Mammary epithelial cell (primary cell): ENCODE measurements at regions of chr20 and their contacts with region 1.

Region 1: GRCh38 chr20:50790651-50791277 is 4.1 kb upstream of the BCAS4 start:
- DNase-seq: peak; percentile 83
- H3K4me3 ChIP-seq: no peak overlapping the region
- H3K27ac ChIP-seq: peak overlapping the region; percentile 83
- H3K4me1 ChIP-seq: peaks cover 14% of the 10 kb centered on the region
- H3K27me3 ChIP-seq: no peaks in the 10 kb centered on the region
- CTCF ChIP-seq: peak; percentile 73 to 92

Region 2: GRCh38 chr20:50189681-50190582 is 600.8 kb before region 1 on chr20:
- CTCF ChIA-PET with region 1: no interaction called
- dilution Hi-C with region 1: no loop called
- in situ Hi-C with region 1: no loop called
- intact Hi-C with region 1: loop called (anchors 1 kb)
- DNase-seq: peak; percentile 69
- H3K4me3 ChIP-seq: peak overlapping the region in 2 of 3 experiments; percentile 89 to 99
- H3K27ac ChIP-seq: peak overlapping the region; percentile 68
- H3K4me1 ChIP-seq: peaks cover 18% of the 10 kb centered on the region
- H3K27me3 ChIP-seq: no peaks in the 10 kb centered on the region
- CTCF ChIP-seq: peak; percentile 25 to 70

Region 3: GRCh38 chr20:50625986-50626677 is 164.6 kb before region 1 on chr20:
- CTCF ChIA-PET with region 1: interaction called, 9 read pairs
- dilution Hi-C with region 1: no loop called
- in situ Hi-C with region 1: no loop called
- intact Hi-C with region 1: loop called (anchors 1 kb)
- DNase-seq: no peak
- H3K4me3 ChIP-seq: no peak overlapping the region
- H3K27ac ChIP-seq: no peak overlapping the region
- H3K4me1 ChIP-seq: peaks cover 26% of the 10 kb centered on the region
- H3K27me3 ChIP-seq: no peaks in the 10 kb centered on the region
- CTCF ChIP-seq: peak; percentile 37 to 51

Region 4: DNA sequence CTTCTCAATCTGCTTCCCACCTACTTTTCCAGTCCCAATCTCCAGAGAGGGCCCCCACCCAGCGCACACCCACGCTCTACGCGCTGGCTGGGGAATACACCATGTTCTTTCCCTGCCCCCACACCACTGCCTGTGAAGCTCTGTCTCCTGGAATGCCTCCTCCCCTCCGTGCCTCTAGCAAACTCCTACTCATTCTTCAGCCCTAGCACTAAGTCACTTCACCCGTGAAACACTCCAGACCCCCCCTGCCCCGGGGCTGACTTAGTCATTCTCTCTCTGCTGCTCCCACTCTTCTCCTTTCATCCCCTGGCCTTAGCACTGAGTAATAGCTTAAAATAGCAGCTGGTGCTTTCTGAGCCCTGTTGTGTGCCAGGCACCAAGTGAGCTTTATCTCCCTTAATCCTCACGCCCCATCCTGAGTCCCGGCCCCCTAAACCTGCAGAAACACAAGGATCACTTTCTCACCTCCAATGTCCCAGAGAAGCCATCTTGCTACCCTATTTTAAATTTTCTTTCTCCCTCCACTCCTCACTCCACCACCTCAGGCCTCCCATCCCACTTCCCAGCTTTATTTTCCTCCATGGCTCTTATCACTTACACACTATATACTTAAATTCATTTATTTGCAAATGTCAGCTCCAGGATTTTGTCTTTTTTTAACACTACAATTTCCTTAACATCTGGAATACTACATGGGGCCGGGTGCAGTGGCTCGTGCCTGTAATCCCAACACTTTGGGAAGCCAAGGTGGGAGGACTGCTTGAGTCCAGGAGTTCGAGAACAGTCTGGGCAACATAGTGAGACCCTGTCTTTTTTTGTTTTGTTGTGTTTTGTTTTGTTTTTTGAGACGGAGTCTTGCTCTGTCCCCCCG is 65.7 kb before region 1 on chr20:
- CTCF ChIA-PET with region 1: no interaction called
- dilution Hi-C with region 1: no loop called
- in situ Hi-C with region 1: no loop called
- intact Hi-C with region 1: no loop called
- DNase-seq: peak; percentile 98
- H3K4me3 ChIP-seq: no peak overlapping the region
- H3K27ac ChIP-seq: peak overlapping the region; percentile 70
- H3K4me1 ChIP-seq: peaks cover 48% of the 10 kb centered on the region
- H3K27me3 ChIP-seq: no peaks in the 10 kb centered on the region
- CTCF ChIP-seq: no peak

Region 5: GRCh38 chr20:50744143-50744792 is 46.5 kb before region 1 on chr20:
- CTCF ChIA-PET with region 1: interaction called, 13 read pairs
- dilution Hi-C with region 1: no loop called
- in situ Hi-C with region 1: no loop called
- intact Hi-C with region 1: loop called (anchors 1 kb)
- DNase-seq: peak; percentile 89
- H3K4me3 ChIP-seq: no peak overlapping the region
- H3K27ac ChIP-seq: peak overlapping the region; percentile 58
- H3K4me1 ChIP-seq: peaks cover 43% of the 10 kb centered on the region
- H3K27me3 ChIP-seq: no peaks in the 10 kb centered on the region
- CTCF ChIP-seq: peak; percentile 47 to 56

Region 6: DNA sequence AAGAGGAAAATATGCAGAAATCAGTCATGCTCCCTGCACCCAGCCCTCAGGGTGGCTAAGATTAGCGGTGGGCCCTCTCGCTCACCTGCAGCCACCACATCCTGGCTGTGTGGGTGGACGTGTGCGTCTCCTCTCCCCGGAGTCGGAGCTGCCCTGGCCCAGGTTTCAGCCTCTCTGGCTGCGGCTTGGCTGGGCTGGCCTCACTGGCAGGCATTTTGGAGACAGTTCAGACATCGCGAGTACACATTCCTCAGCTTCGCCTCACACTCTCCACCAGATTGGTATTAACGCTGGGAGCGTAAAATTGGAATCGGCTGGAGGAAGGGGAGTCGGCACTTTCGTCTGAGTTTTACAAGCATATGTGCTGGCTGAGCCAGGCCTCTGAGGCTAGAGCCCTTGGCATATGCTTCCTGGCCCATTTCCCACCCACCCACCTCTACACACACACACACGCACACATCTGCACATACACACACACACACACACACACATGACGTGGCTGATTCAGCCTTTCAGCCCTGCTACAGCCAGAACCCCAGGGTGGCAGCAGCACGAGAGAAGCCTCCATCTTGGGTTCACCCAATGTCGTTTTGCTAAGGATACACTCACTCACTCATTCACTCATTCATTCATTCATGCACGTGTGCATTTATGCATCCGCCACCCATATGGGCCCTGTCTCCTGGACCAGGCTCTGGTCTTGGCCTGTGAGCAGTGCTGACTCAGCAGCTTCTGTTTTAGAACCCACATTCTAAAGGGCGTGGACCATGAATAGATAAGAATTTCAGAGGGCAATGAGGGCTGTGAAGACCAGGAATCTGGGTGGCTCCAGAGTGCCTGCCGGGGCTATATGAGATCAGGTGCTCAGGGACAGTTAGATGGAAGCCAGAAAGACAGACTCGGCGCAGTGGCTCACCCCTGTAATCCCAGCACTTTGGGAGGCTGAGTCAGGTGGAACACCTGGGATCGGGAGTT is 47.1 kb after region 1 on chr20:
- CTCF ChIA-PET with region 1: no interaction called
- dilution Hi-C with region 1: loop called (anchors 5 kb)
- in situ Hi-C with region 1: no loop called
- intact Hi-C with region 1: no loop called
- DNase-seq: peak; percentile 89
- H3K4me3 ChIP-seq: no peak overlapping the region
- H3K27ac ChIP-seq: peak overlapping the region; percentile 70
- H3K4me1 ChIP-seq: peaks cover 34% of the 10 kb centered on the region
- H3K27me3 ChIP-seq: no peaks in the 10 kb centered on the region
- CTCF ChIP-seq: no peak

Region 7: DNA sequence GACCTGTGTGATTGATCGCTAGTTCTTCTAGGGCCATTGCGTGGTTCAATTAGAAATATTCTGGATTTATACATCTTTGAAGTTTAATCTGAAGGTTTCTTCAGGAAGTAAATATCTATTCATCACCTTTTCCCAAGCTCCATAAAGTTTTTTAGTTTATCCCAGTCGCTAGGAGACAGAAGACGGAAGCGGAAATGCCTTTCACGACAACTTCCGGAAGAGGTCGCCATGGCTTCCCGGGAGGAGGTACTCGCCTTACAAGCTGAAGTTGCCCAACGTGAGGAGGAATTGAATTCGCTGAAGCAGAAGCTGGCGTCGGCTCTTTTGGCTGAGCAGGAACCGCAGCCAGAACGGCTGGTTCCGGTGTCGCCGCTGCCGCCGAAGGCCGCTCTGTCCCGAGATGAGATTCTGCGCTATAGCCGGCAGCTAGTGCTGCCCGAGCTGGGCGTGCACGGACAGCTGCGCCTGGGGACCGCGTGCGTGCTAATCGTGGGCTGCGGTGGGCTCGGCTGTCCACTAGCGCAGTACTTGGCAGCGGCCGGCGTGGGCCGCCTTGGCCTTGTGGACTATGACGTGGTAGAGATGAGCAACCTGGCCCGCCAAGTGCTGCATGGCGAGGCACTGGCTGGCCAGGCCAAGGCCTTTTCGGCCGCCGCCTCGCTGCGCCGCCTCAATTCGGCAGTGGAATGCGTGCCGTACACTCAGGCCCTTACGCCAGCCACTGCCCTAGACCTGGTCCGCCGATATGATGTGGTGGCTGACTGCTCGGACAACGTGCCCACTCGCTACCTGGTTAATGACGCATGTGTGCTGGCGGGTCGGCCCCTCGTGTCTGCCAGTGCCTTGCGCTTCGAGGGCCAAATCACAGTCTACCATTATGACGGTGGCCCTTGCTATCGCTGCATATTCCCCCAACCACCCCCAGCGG is 168.1 kb after region 1 on chr20 and contains the start of gene MOCS3:
- CTCF ChIA-PET with region 1: interaction called, 11 read pairs
- dilution Hi-C with region 1: no loop called
- in situ Hi-C with region 1: no loop called
- intact Hi-C with region 1: loop called (anchors 1 kb)
- DNase-seq: peak; percentile 86
- H3K4me3 ChIP-seq: peak within 1 kb of the TSS; percentile 78 to 100 (median 99)
- H3K27ac ChIP-seq: peak within 1 kb of the TSS; percentile 99
- H3K4me1 ChIP-seq: peaks cover 29% of the 10 kb centered on the region
- H3K27me3 ChIP-seq: no peaks in the 10 kb centered on the region
- CTCF ChIP-seq: no peak
- total RNA-seq, gene MOCS3: 7.2 to 10.8 TPM

Region 8: GRCh38 chr20:51306503-51307358 is 516.0 kb after region 1 on chr20:
- CTCF ChIA-PET with region 1: no interaction called
- dilution Hi-C with region 1: loop called (anchors 25 kb)
- in situ Hi-C with region 1: no loop called
- intact Hi-C with region 1: loop called (anchors 1 kb)
- DNase-seq: peak; percentile 41
- H3K4me3 ChIP-seq: no peak overlapping the region
- H3K27ac ChIP-seq: no peak overlapping the region
- H3K4me1 ChIP-seq: no peaks in the 10 kb centered on the region
- H3K27me3 ChIP-seq: no peaks in the 10 kb centered on the region
- CTCF ChIP-seq: peak; percentile 74 to 94